ENCODE measurements at regions of chr14 and their contacts with region 1.

Region 1: DNA sequence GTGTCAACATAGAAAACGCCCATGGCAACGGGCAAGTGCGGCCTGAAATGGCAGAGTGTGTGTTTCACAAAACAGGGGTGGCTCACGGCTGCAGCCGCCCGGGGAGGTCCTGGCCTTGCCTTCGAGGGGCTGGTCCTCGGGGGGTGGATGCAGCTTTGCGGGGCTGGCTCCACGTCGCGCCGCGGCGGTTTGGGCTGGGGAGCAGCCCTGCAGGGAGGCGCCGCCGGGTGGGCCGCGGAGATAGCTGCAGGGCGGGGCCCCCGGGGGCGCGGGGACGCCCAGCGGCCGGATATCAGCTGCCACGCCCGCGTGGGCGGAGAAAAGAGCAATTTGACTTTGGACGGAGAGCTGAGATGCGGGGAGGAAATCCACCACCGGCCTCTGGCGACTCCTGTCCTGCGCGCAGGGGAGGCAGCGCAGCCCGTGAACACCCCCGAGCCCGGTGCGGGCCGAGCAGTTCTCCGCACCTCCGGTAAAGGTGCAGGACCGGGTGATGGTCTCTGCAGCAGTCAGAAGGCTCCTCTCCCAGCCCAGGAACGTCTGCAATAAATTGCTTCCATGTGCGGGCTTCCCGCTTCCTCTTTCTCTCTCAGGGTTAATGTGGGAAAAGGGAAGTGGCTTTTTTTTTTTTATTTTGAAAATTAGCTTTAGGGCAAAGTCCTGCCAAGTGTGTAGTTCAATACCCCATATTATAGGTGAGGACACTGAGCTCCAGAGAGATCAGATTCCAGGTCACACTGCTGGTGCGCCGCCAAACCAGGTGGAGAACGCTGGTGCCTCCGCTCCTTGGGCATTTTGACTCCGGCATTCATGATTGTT is 110.5 kb downstream of the ARF6 start:
- DNase-seq: peak; percentile 89
- ATAC-seq: peak; percentile 46
- H3K4me3 Mint-ChIP-seq: peak overlapping the region; percentile 76
- H3K27ac Mint-ChIP-seq: peak overlapping the region; percentile 96
- H3K4me1 Mint-ChIP-seq: peaks cover 74% of the 10 kb centered on the region
- H3K27me3 Mint-ChIP-seq: no peaks in the 10 kb centered on the region

Region 2: GRCh38 chr14:49867831-49868723 is 135.3 kb before region 1 on chr14:
- CTCF ChIA-PET with region 1: interaction called, 89 read pairs
- POLR2A ChIA-PET with region 1: interaction called, 168 read pairs
- DNase-seq: peak; percentile 99
- ATAC-seq: peak; percentile 91
- H3K4me3 Mint-ChIP-seq: peak overlapping the region; percentile 91
- H3K27ac Mint-ChIP-seq: peak overlapping the region; percentile 96
- H3K4me1 Mint-ChIP-seq: peaks cover 21% of the 10 kb centered on the region
- H3K27me3 Mint-ChIP-seq: no peaks in the 10 kb centered on the region

Region 3: GRCh38 chr14:49898485-49898884 is 104.9 kb before region 1 on chr14:
- CTCF ChIA-PET with region 1: interaction called, 15 read pairs
- POLR2A ChIA-PET with region 1: interaction called, 89 read pairs
- DNase-seq: no peak
- ATAC-seq: peak; percentile 4
- H3K4me3 Mint-ChIP-seq: peak overlapping the region; percentile 90
- H3K27ac Mint-ChIP-seq: peak overlapping the region; percentile 71
- H3K4me1 Mint-ChIP-seq: peaks cover 26% of the 10 kb centered on the region
- H3K27me3 Mint-ChIP-seq: no peaks in the 10 kb centered on the region

Region 4: GRCh38 chr14:49971156-49972130 is 32.0 kb before region 1 on chr14:
- CTCF ChIA-PET with region 1: interaction called, 54 read pairs
- POLR2A ChIA-PET with region 1: interaction called, 307 read pairs
- DNase-seq: peak; percentile 79
- ATAC-seq: peak; percentile 79
- H3K4me3 Mint-ChIP-seq: peak overlapping the region; percentile 70
- H3K27ac Mint-ChIP-seq: peak overlapping the region; percentile 96
- H3K4me1 Mint-ChIP-seq: peaks cover 65% of the 10 kb centered on the region
- H3K27me3 Mint-ChIP-seq: no peaks in the 10 kb centered on the region

Region 5: GRCh38 chr14:49992901-49993335 is 10.5 kb before region 1 on chr14:
- CTCF ChIA-PET with region 1: no interaction called
- POLR2A ChIA-PET with region 1: interaction called, 40 read pairs
- DNase-seq: no peak
- ATAC-seq: peak; percentile 39
- H3K4me3 Mint-ChIP-seq: no peak overlapping the region
- H3K27ac Mint-ChIP-seq: peak overlapping the region; percentile 74
- H3K4me1 Mint-ChIP-seq: peaks cover 55% of the 10 kb centered on the region
- H3K27me3 Mint-ChIP-seq: no peaks in the 10 kb centered on the region

Region 6: GRCh38 chr14:50045039-50045711 is 41.8 kb after region 1 on chr14:
- CTCF ChIA-PET with region 1: interaction called, 5 read pairs
- POLR2A ChIA-PET with region 1: interaction called, 95 read pairs
- DNase-seq: peak; percentile 91
- ATAC-seq: peak; percentile 84
- H3K4me3 Mint-ChIP-seq: peak overlapping the region; percentile 13
- H3K27ac Mint-ChIP-seq: peak overlapping the region; percentile 89
- H3K4me1 Mint-ChIP-seq: peaks cover 75% of the 10 kb centered on the region
- H3K27me3 Mint-ChIP-seq: no peaks in the 10 kb centered on the region

Region 7: DNA sequence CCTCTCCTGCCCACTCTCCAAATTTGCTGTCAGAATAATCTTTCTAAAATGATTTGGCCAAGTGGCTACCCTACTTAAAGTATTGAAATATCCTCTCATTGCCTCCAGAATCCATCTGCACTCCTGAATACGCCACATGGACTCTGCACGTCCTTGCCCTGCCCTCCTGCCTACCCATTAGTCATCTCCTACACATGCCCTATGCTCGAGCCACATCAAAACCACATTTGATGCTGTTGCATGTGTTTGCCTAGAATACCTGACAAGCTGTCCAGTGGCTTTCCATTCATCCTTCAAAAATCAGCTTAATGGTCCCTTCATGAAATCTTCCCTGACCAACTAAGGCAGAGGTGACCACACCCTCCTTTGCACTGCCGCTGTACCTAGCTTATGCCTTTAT is 95.9 kb after region 1 on chr14:
- CTCF ChIA-PET with region 1: interaction called, 9 read pairs
- POLR2A ChIA-PET with region 1: interaction called, 22 read pairs
- DNase-seq: no peak
- ATAC-seq: no peak
- H3K4me3 Mint-ChIP-seq: no peak overlapping the region
- H3K27ac Mint-ChIP-seq: peak overlapping the region; percentile 33
- H3K4me1 Mint-ChIP-seq: peaks cover 85% of the 10 kb centered on the region
- H3K27me3 Mint-ChIP-seq: no peaks in the 10 kb centered on the region

Region 8: GRCh38 chr14:50363714-50364111 is 360.3 kb after region 1 on chr14:
- CTCF ChIA-PET with region 1: no interaction called
- POLR2A ChIA-PET with region 1: no interaction called
- DNase-seq: peak; percentile 77
- ATAC-seq: peak; percentile 92
- H3K4me3 Mint-ChIP-seq: peak overlapping the region; percentile 80
- H3K27ac Mint-ChIP-seq: peak overlapping the region; percentile 96
- H3K4me1 Mint-ChIP-seq: peaks cover 38% of the 10 kb centered on the region
- H3K27me3 Mint-ChIP-seq: no peaks in the 10 kb centered on the region